ENCODE measurements at regions of chr7 and their contacts with region 1.

Region 1: GRCh38 chr7:103325744-103326143 is 18.8 kb downstream of the DNAJC2 start:
- DNase-seq: no peak
- CTCF ChIP-seq: no peak

Region 2: DNA sequence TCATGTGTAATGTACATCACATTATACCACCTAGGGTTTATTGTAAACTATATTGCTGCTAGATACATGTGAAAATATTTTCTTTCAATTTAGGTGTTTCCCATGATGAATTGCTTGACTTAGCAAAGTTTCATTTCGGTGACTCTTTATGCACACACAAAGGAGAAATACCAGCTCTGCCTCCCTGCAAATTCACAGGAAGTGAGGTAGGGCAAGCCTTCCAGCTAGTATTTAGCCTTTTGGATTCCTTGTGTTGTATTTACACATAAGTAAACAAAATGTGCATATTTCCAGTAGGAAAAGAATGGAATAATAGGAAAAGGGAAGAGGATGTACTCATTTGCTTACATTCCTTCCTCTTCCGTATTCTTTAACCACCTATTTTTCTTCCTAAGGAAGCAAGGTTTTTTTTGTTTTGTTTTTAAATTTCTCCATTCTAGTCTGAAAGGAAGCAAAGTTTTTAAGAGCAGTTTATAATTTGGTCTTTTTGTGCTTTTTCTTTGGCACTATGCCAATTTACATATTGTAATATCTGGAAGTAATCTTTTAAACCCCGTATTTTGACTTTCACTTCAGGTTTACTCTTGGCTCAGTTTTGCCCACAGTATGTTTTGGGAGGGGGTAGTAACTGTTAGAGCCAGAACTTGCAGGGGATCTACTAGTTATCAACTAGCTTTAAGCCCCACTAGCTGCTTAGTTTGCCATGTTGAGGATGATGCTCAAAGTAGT is 18.1 kb before region 1 on chr7:
- CTCF ChIA-PET with region 1: interaction called, 11 read pairs
- POLR2A ChIA-PET with region 1: no interaction called
- DNase-seq: no peak
- CTCF ChIP-seq: no peak